ENCODE measurements at regions of chr17 and their contacts with region 1.

Region 1: DNA sequence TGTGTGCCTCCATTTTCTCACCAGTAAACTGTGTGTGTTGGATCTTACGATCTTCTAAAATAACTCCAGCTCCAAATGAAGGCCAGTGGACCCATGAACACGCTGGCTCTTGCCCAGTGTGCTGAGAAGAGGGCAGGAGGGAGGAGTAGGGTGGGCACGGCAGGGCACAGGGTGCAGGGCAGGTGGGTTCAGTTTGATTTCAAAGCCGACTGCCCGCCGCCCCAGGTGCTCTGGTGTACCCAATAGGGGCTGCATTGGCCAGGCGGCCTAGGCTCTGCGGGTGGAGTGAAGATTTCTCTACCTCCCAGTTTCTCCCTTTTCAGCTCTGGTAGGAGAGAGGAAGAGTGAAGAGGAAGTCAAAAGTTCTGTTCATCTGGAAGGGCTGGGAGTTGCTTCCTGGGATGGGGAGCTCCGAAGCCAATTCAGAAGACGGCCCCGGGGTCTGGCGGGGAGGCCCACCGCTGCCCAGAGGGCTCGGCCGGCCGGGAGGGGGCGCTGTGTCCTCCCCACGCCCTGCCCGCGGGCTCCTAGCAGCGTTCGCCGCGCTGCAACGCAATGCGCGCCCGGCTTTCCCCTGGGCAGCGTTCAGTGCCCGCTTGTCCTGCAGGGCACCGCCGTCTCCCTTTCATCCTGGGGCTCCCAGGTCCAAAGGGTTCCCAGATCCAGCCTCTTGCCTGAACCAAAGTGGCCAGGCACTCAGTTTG is 1.1 kb upstream of the CRHR1 start:
- DNase-seq: no peak
- ATAC-seq: no peak
- H3K4me3 Mint-ChIP-seq: peak overlapping the region; percentile 66
- H3K27ac Mint-ChIP-seq: no peak overlapping the region
- H3K4me1 Mint-ChIP-seq: peaks cover 11% of the 10 kb centered on the region
- H3K27me3 Mint-ChIP-seq: peaks cover 58% of the 10 kb centered on the region
- CTCF ChIP-seq: no peak

Region 2: DNA sequence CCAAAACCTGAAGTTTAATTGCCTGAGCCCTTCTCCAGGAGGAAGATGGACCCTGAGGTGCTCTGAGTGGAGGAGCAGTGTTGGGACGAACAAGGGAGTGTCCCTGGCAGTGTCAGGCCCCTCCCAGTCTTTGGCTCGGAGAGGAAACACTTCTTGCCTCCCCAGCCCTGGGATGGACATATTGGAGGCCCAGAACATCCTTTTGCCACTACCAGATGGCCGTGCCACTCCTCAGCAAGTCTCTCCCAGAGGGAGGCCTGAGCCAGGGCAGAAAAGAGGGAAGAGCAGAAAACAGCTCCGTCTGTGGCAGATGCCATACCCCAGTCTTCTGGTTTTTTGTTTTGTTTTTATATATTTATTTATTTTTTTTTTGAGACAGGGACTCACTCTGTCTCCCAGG is 90.4 kb before region 1 on chr17:
- CTCF ChIA-PET with region 1: no interaction called
- POLR2A ChIA-PET with region 1: no interaction called
- intact Hi-C with region 1: loop called (anchors 10 kb)
- DNase-seq: no peak
- ATAC-seq: no peak
- H3K4me3 Mint-ChIP-seq: no peak overlapping the region
- H3K27ac Mint-ChIP-seq: no peak overlapping the region
- H3K4me1 Mint-ChIP-seq: no peaks in the 10 kb centered on the region
- H3K27me3 Mint-ChIP-seq: peaks cover 38% of the 10 kb centered on the region
- CTCF ChIP-seq: no peak

Region 3: DNA sequence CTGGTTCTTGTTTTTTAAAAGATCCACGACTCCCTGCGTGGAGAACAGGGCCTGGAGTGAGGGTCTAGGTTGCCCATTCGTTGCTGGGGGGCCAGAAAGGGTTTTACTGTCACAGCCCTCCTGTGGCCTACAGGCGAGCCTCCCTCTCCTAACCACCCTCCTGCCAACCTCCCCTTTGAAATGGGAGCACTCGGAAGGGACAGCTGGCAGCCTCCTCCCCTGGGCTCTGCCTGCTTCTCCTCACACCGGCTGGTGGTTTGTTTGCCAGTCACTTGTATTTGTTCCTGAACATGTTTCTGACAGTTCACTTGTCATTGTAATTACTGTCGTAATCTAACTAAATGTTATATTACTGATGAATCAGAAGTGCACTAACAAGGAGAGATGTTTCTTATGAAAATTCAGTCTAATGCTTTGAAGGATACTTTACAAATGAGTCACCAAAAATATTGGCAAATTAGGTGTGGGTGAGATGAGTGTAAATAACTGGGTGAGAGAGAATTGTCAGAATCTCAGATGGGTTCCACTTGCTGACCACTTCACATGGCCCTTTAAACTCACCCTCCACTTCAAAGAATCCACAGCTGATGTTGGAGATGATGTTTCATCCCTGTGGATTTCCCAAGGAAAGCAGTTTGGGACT is 59.0 kb after region 1 on chr17:
- CTCF ChIA-PET with region 1: no interaction called
- POLR2A ChIA-PET with region 1: no interaction called
- intact Hi-C with region 1: no loop called
- DNase-seq: no peak
- ATAC-seq: no peak
- H3K4me3 Mint-ChIP-seq: no peak overlapping the region
- H3K27ac Mint-ChIP-seq: no peak overlapping the region
- H3K4me1 Mint-ChIP-seq: no peaks in the 10 kb centered on the region
- H3K27me3 Mint-ChIP-seq: peaks cover under 1% of the 10 kb centered on the region
- CTCF ChIP-seq: no peak

Measured in activated B cell treated with CpG ODN at 0.5 μM for 24 hours (primary cell).